HCT116 (cell line): ENCODE measurements at regions of chr17 and their contacts with region 1.

Region 1: DNA sequence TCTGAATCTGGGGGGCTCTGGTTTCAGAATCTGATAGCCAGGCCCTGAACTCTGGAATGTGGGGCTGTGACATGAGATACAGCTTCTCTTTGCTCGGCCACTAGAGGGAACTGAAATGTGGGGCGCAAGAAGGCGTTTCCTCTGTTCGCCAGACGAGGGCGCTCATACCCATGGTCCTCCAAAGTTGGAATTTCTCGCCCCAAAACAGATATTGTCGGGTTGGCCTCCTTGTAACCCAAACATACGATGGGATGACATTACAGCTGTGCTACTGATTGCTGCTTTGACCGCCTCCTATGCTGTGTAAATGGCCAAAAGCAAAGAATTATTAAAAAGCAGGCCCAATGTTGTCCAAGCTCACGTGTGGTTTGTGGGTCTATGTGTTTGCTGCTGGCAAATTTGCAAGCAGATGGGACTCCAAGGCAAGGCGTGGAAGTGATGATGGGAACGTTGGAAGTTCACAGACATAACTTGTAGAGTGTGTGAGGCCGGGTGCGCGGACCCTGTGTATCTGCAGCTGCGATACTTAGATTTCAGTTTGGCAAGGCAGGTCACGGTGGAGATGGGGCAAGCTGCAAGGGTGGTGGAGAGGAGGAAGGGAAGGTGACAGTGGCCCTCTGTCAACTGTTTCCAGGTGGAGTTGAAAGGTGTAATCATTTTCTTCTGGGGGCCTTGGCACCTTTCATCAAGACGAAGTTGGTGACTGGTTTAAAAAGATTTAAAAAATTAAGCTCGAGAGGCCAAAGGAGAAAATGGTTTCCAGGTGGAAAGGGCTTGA is 13.0 kb upstream of the MSI2 start:
- DNase-seq: peak; percentile 71
- ATAC-seq: peak; percentile 95
- H3K4me3 ChIP-seq: no peak overlapping the region
- H3K27ac ChIP-seq: no peak overlapping the region
- H3K4me1 ChIP-seq: peaks cover 0 to 5% of the 10 kb centered on the region in 2 experiments; a peak in 1 of 4 replicates
- H3K27me3 ChIP-seq: no peaks in the 10 kb centered on the region
- CTCF ChIP-seq: peak; percentile 100
- POLR2A ChIP-seq: no peak
- RAD21 ChIP-seq: peak; percentile 99

Region 2: DNA sequence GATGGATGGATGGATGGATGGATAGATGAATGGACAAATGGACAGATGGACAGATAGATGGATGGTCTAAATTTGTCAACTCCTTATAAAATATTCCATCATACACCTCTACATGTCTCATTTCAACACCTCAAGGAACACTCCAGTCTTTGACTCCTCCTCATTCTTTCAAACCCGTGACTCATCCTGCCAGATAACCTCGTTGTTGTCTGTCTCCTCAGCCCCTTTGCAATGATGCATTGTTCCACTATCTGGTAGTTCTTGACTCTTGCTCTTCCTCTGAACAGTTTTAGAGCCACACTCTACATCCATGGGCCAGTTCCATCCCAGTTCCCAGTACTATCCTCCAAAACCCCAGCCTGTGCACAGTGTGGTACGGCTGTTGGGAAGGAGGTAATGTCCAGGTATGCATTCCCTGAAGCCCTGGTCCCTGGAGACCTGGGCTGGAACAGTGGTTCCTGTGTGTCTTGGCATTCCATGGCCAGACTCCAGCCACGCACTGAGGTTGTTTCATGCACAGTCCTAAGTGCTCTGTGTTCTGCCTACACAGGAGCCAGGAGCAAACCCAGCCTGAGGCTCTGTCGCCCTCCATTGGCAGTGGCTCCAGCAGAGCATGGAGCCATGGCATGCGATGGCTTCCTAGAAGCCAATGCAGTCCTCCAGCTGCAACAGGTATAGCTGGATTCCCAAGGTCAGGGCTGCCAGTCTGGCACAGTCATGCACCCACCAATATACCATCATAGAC is 515.3 kb before region 1 on chr17:
- CTCF ChIA-PET with region 1: no interaction called
- POLR2A ChIA-PET with region 1: no interaction called
- RAD21 ChIA-PET with region 1: no interaction called
- intact Hi-C with region 1: no loop called
- DNase-seq: no peak
- ATAC-seq: peak; percentile 49
- H3K4me3 ChIP-seq: no peak overlapping the region
- H3K27ac ChIP-seq: no peak overlapping the region
- H3K4me1 ChIP-seq: no peaks in the 10 kb centered on the region
- H3K27me3 ChIP-seq: peaks cover 21% of the 10 kb centered on the region; the same call in 1 of the 2 replicates
- CTCF ChIP-seq: no peak
- POLR2A ChIP-seq: no peak
- RAD21 ChIP-seq: no peak; the same call in 1 of the 2 replicates

Region 3: DNA sequence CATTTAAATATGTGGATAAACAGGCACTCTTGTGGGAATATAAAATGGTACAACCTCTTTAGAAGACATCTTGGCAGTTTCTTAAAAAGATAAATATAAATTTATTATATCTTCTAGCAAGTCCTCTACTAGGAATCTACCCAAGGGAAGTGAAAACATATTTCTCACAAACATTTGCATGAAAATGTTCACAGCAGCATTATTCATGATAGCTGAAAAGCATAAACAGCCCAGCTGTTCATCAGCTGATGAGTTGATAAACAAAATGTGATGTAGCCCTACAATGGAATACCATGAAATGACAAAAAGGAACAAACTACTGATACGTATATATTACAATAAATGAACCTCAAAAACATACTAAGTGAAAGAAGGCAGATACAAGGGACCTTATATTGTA is 397.4 kb before region 1 on chr17:
- CTCF ChIA-PET with region 1: no interaction called
- POLR2A ChIA-PET with region 1: no interaction called
- RAD21 ChIA-PET with region 1: no interaction called
- intact Hi-C with region 1: no loop called
- DNase-seq: no peak
- ATAC-seq: no peak
- H3K4me3 ChIP-seq: no peak overlapping the region
- H3K27ac ChIP-seq: no peak overlapping the region
- H3K4me1 ChIP-seq: no peaks in the 10 kb centered on the region
- H3K27me3 ChIP-seq: no peaks in the 10 kb centered on the region
- CTCF ChIP-seq: no peak
- POLR2A ChIP-seq: no peak
- RAD21 ChIP-seq: no peak

Region 4: GRCh38 chr17:57255776-57256681 is 12.7 kb after region 1 on chr17 and contains the start of gene MSI2:
- CTCF ChIA-PET with region 1: interaction called, 43 read pairs
- POLR2A ChIA-PET with region 1: interaction called, 4 read pairs
- RAD21 ChIA-PET with region 1: interaction called, 3 read pairs
- intact Hi-C with region 1: no loop called
- DNase-seq: peak; percentile 75
- ATAC-seq: peak; percentile 82
- H3K4me3 ChIP-seq: peak within 1 kb of the TSS; percentile 65 to 72
- H3K27ac ChIP-seq: peak within 1 kb of the TSS; percentile 60
- H3K4me1 ChIP-seq: peaks cover 13 to 27% of the 10 kb centered on the region in 2 experiments
- H3K27me3 ChIP-seq: no peaks in the 10 kb centered on the region
- CTCF ChIP-seq: no peak
- POLR2A ChIP-seq: peak; percentile 34
- RAD21 ChIP-seq: no peak
- total RNA-seq, gene MSI2: 137 TPM

Region 5: GRCh38 chr17:57422574-57423164 is 179.3 kb after region 1 on chr17:
- CTCF ChIA-PET with region 1: interaction called, 14 read pairs
- POLR2A ChIA-PET with region 1: no interaction called
- RAD21 ChIA-PET with region 1: no interaction called
- intact Hi-C with region 1: no loop called
- DNase-seq: peak; percentile 89
- ATAC-seq: peak; percentile 87
- H3K4me3 ChIP-seq: peak overlapping the region in 1 of 2 experiments; percentile 37; a peak in 2 of 4 replicates
- H3K27ac ChIP-seq: peak overlapping the region; percentile 78
- H3K4me1 ChIP-seq: peaks cover 70 to 71% of the 10 kb centered on the region in 2 experiments
- H3K27me3 ChIP-seq: no peaks in the 10 kb centered on the region
- CTCF ChIP-seq: no peak
- POLR2A ChIP-seq: no peak
- RAD21 ChIP-seq: peak; percentile 39; the same call in 1 of the 2 replicates

Region 6: DNA sequence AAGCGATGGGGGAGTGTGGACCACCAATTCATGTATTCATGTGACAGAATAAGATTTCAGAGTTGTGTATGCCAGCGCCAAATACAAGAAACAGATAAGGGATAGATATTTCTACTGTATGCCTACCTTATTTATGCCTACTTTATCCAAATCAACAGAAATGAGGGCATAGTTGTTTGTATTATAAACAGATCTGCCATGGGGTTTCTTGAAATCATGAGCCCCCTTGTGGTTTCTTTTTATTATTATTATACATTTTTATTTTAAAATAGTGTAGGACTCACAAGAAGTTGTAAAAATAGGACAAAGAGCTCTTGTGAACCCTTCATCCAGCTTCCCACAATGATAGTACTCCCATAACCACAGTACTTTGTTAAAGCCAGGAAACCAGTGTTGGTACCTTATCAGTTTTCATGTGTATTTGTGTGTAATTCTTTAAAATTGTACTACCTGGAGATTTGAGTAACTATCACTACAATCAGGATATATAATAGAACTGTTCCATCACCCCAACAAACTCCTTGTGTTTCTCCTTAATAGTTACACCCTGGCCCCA is 272.4 kb after region 1 on chr17:
- CTCF ChIA-PET with region 1: interaction called, 19 read pairs
- POLR2A ChIA-PET with region 1: no interaction called
- RAD21 ChIA-PET with region 1: no interaction called
- intact Hi-C with region 1: loop called (anchors 1 kb)
- DNase-seq: no peak
- ATAC-seq: no peak
- H3K4me3 ChIP-seq: no peak overlapping the region
- H3K27ac ChIP-seq: no peak overlapping the region
- H3K4me1 ChIP-seq: peaks cover 30 to 47% of the 10 kb centered on the region in 2 experiments
- H3K27me3 ChIP-seq: no peaks in the 10 kb centered on the region
- CTCF ChIP-seq: peak in 1 of 3 experiments; percentile 54; a peak in 1 of 6 replicates
- POLR2A ChIP-seq: no peak
- RAD21 ChIP-seq: peak; percentile 35; the same call in 1 of the 2 replicates

Region 7: GRCh38 chr17:57739402-57740392 is 496.3 kb after region 1 on chr17:
- CTCF ChIA-PET with region 1: interaction called, 16 read pairs
- POLR2A ChIA-PET with region 1: no interaction called
- RAD21 ChIA-PET with region 1: no interaction called
- intact Hi-C with region 1: no loop called
- DNase-seq: peak; percentile 61
- ATAC-seq: peak; percentile 91
- H3K4me3 ChIP-seq: no peak overlapping the region
- H3K27ac ChIP-seq: no peak overlapping the region
- H3K4me1 ChIP-seq: no peaks in the 10 kb centered on the region
- H3K27me3 ChIP-seq: peaks cover 10% of the 10 kb centered on the region; the same call in 1 of the 2 replicates
- CTCF ChIP-seq: peak; percentile 76 to 85 (median 85)
- POLR2A ChIP-seq: no peak
- RAD21 ChIP-seq: peak; percentile 82

Region 8: DNA sequence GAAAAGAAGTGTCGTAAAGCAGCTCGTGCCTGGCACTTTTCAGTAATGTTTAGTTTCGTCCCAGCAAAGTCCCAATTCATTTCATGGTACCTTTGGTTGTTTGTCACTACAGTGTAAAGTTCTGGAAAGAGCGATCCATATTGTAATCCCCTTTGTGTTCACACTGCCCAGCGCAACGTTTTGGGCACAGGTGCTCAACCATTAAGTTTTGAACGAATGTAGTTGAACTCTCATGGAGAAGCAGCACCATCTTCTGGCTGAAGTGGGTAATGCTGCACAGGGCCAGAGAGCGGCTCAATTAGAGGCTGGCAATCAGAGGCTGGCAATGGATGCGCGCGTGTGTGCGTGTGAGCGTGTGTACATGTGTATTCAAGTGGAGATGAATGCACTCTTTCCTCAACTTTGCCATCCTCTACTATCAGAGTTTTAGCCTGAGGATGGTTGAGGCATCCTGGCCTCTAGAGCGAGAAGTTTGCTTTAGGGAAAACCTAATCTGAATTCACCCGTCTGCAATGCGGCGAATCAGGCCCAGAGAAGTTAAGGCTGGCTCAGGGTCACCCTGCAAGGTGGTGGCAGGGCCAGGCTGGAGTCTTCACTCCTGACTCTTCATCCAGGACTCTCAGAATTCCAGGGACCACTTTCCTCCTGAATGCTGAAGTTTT is 869.7 kb after region 1 on chr17:
- CTCF ChIA-PET with region 1: no interaction called
- POLR2A ChIA-PET with region 1: no interaction called
- RAD21 ChIA-PET with region 1: no interaction called
- intact Hi-C with region 1: loop called (anchors 1 kb)
- DNase-seq: peak; percentile 79
- ATAC-seq: peak; percentile 93
- H3K4me3 ChIP-seq: no peak overlapping the region
- H3K27ac ChIP-seq: no peak overlapping the region
- H3K4me1 ChIP-seq: peaks cover 0 to 3% of the 10 kb centered on the region in 2 experiments; a peak in 1 of 4 replicates
- H3K27me3 ChIP-seq: peaks cover 12% of the 10 kb centered on the region; the same call in 1 of the 2 replicates
- CTCF ChIP-seq: peak; percentile 95 to 100 (median 99)
- POLR2A ChIP-seq: no peak
- RAD21 ChIP-seq: peak; percentile 100